Endothelial cell of umbilical vein (primary cell): ENCODE measurements at regions of chr7 and their contacts with region 1.

Region 1: GRCh38 chr7:41977151-41977651 is 259.8 kb downstream of the GLI3 start:
- DNase-seq: peak; percentile 65
- H3K4me3 ChIP-seq: no peak overlapping the region
- H3K27ac ChIP-seq: no peak overlapping the region
- H3K4me1 ChIP-seq: no peaks in the 10 kb centered on the region
- H3K27me3 ChIP-seq: no peaks in the 10 kb centered on the region
- CTCF ChIP-seq: peak; percentile 54 to 69
- POLR2A ChIP-seq: no peak

Region 2: DNA sequence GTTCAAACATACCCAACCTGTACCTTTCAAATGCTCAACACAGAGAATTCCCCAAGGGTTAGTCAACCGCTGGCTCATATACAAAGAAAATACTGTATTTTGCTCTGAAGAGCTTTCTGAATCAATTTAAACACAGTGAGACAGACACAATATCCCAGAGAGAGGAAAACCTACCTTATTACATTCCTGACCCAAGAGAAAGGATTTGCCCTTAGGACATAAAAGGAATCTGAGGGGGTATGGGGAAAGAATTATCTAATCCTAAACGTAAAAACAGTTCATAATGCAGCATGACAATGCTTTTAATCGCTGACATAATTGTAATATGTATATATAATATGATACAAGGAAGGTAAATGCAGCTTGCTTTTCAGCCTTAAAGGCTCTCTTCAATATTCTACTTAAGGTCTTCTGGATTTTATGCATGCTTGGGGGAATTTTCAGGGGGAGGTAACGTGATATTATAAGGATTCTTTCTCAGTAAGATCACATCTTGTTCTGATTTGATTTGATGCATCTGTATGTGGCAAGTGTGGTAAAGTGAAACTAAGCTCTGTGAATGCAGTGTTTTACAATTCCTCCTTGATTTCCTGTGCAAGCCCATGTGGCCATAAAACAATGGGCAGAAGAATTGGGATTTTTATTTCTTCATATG is 19.3 kb after region 1 on chr7:
- CTCF ChIA-PET with region 1: interaction called, 23 read pairs
- POLR2A ChIA-PET with region 1: no interaction called
- dilution Hi-C with region 1: no loop called
- intact Hi-C with region 1: no loop called
- DNase-seq: peak; percentile 60
- H3K4me3 ChIP-seq: no peak overlapping the region
- H3K27ac ChIP-seq: peak overlapping the region; percentile 26
- H3K4me1 ChIP-seq: peaks cover 44% of the 10 kb centered on the region
- H3K27me3 ChIP-seq: no peaks in the 10 kb centered on the region
- CTCF ChIP-seq: no peak
- POLR2A ChIP-seq: no peak

Region 3: DNA sequence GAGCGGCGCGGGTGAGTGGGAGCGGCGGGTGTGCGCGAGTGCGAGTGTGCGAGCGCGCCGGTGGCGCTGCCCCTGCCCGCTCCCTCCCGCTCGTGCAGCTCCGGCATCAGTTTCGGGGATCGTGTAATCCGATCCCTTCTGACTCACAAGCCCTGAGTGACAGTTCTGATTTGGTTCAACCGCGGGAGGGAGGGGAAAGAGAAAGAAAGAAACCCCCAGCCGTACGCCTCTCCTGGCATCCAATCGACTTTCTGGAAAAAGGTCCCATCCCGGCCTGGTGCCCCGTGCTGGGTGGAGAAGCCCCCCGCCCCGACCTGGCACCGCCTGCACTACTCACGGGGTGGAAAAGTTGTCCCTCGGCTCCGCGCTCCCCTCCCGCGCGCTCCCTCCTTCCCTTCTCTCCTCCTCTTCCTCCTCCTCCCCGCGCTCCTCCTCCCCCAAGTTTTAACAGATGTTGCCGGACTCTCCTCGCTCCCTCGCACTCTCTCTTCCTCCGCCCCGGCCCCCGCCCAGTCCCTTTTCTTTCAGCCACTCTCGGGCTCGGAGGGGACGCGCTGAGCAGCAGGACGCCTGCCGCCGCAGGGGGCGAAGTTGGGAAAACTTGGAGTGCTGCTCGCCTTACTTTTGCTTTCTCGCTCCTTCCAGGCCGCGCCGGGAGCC is 260.1 kb after region 1 on chr7 and contains the start of gene GLI3:
- CTCF ChIA-PET with region 1: interaction called, 3 read pairs
- POLR2A ChIA-PET with region 1: no interaction called
- dilution Hi-C with region 1: loop called (anchors 25 kb)
- intact Hi-C with region 1: loop called (anchors 2 kb)
- DNase-seq: peak; percentile 90
- H3K4me3 ChIP-seq: peak within 1 kb of the TSS; percentile 85 to 95 (median 90)
- H3K27ac ChIP-seq: peak within 1 kb of the TSS; percentile 78
- H3K4me1 ChIP-seq: peaks cover 23% of the 10 kb centered on the region
- H3K27me3 ChIP-seq: no peaks in the 10 kb centered on the region
- CTCF ChIP-seq: peak in 1 of 2 donors; percentile 52
- POLR2A ChIP-seq: peak; percentile 75
- total RNA-seq, gene GLI3: 24.9 and 30.3 TPM in 2 replicates

Region 4: GRCh38 chr7:42574685-42575084 is 597.5 kb after region 1 on chr7:
- CTCF ChIA-PET with region 1: interaction called, 10 read pairs
- POLR2A ChIA-PET with region 1: no interaction called
- dilution Hi-C with region 1: no loop called
- intact Hi-C with region 1: no loop called
- DNase-seq: no peak
- H3K4me3 ChIP-seq: no peak overlapping the region
- H3K27ac ChIP-seq: no peak overlapping the region
- H3K4me1 ChIP-seq: no peaks in the 10 kb centered on the region
- H3K27me3 ChIP-seq: no peaks in the 10 kb centered on the region
- CTCF ChIP-seq: no peak
- POLR2A ChIP-seq: no peak

Region 5: GRCh38 chr7:42831718-42832431 is 854.7 kb after region 1 on chr7:
- CTCF ChIA-PET with region 1: interaction called, 21 read pairs
- POLR2A ChIA-PET with region 1: no interaction called
- dilution Hi-C with region 1: no loop called
- intact Hi-C with region 1: no loop called
- DNase-seq: peak; percentile 10
- H3K4me3 ChIP-seq: no peak overlapping the region
- H3K27ac ChIP-seq: no peak overlapping the region
- H3K4me1 ChIP-seq: no peaks in the 10 kb centered on the region
- H3K27me3 ChIP-seq: peaks cover 0 to 5% of the 10 kb centered on the region in 2 experiments
- CTCF ChIP-seq: peak; percentile 10 to 32
- POLR2A ChIP-seq: no peak

Region 6: GRCh38 chr7:42876182-42877068 is 899.2 kb after region 1 on chr7:
- CTCF ChIA-PET with region 1: interaction called, 25 read pairs
- POLR2A ChIA-PET with region 1: no interaction called
- dilution Hi-C with region 1: no loop called
- intact Hi-C with region 1: loop called (anchors 1 kb)
- DNase-seq: peak; percentile 67
- H3K4me3 ChIP-seq: no peak overlapping the region
- H3K27ac ChIP-seq: no peak overlapping the region
- H3K4me1 ChIP-seq: no peaks in the 10 kb centered on the region
- H3K27me3 ChIP-seq: peaks cover 3 to 6% of the 10 kb centered on the region in 2 experiments
- CTCF ChIP-seq: peak; percentile 60 to 68
- POLR2A ChIP-seq: no peak

Region 7: DNA sequence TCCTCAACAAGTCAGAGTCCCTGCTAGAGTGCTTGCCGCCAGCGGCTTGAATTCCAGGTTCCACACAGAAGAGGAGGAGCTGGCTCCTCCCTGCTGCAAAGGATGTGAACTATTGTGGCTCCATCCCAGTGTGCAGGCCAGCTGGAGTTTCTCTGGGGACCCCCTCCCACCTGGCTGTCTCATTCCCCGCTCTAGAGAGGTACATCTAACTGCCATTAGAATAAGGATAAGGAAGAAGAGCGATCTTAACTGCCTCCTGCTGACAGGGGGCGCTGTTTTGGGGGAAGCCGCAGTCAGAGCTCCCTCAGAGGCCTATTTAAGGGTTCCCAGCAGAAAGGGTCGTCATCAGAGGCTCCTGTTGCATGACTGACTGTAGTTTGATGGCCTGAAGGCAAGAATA is 1094.4 kb after region 1 on chr7:
- CTCF ChIA-PET with region 1: no interaction called
- POLR2A ChIA-PET with region 1: no interaction called
- dilution Hi-C with region 1: no loop called
- intact Hi-C with region 1: no loop called
- DNase-seq: no peak
- H3K4me3 ChIP-seq: no peak overlapping the region
- H3K27ac ChIP-seq: no peak overlapping the region
- H3K4me1 ChIP-seq: no peaks in the 10 kb centered on the region
- H3K27me3 ChIP-seq: no peaks in the 10 kb centered on the region
- CTCF ChIP-seq: peak in 1 of 2 donors; percentile 27
- POLR2A ChIP-seq: no peak